Activated T-helper 1 cell treated with anti-CD3 and anti-CD28 coated beads, Interleukin-12 subunit alpha, Interleukin-12 subunit beta, Interleukin-2, Interleukin-4 antibody, amounts not matched to agents 30 ng/mL and 10 ng/mL and 1 ng/mL, durations not matched to agents 14 hours and 24 hours and 36 hours (primary cell): ENCODE measurements at regions of chr11 and their contacts with region 1.

Region 1: DNA sequence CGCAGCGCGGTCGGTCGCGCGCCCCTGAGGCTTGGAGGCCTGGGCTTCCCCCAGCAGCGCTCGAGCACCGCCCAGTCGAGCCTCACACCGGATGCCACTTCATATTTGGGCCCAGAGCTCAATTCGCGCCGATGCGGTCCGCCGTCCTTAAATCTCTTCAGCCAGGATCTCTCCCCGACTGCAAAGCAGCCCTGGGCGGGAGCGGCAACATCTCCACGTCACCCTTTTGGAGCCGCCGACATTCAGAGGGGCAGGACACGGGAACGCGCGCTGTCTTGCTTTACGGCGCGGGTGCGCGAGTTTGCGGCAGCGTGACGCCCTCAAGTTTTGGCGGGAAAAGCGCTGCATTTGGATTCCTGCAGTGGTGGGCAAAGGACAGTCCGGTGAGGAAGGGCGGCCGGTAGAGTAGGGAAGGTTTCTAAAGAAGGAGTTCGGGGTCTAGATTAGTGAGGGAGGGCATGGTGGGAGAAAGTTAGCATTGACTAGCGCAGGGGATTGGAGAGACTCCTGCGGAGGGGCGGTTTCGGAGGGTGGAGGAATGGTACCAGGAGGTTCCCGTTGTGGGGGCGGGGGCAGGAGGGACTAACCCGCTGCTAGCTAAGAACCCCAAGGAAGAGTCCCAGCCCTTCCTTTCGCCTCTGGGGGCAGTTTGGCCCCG is 796 bp downstream of the CHEK1 start:
- DNase-seq: peak; percentile 82
- H3K4me3 Mint-ChIP-seq: peak overlapping the region; percentile 98
- H3K27ac Mint-ChIP-seq: peak overlapping the region; percentile 99
- H3K4me1 Mint-ChIP-seq: peaks cover 38% of the 10 kb centered on the region
- H3K27me3 Mint-ChIP-seq: no peaks in the 10 kb centered on the region

Region 2: DNA sequence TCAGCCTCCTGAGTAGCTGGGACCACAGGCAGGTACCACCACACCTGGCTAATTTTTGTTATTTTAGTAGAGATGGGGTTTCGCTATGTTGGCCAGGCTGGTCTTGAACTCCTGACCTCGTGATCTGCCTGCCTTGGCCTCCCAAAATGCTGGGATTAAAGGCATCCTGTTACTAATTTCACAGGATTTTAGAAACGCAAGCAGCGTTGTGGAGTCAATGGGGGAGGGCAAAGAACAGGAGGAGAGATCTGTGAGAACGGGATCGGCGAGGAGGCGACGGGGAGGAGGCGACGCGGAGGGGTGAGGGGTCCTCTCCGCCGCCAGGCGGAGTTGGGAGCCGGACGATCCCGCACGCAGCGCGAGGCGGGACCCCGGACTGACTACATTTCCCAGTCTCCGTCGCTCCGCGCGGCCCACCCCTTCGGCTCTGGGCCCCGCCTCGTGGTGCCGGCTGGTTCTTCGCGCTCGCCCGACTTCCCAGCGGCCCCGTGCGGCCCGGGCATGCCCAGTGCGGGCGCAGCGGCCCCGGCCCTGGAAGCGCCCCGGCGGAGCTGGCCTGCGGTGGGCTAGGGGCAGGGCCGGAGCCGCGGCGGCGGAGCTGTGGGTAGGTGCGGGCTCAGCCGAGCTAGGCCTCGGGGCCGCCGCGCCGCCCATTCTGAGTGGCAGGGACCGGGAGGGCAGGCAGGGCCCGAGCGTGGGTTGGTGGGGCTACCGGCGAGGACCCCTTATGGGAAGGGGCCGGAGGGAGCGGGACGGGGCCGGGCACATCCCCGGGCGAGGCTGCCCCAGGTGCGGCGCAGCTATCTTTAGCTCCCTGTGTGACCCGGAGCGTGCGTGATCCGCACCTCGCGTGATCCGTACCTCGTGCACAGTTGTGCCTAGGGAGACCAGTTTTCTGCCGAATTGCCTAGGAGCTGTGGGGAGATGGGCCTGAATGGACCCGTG is 56.5 kb before region 1 on chr11 and contains the start of gene EI24:
- intact Hi-C with region 1: loop called (anchors 1 kb)
- DNase-seq: peak; percentile 88
- H3K4me3 Mint-ChIP-seq: peak within 1 kb of the TSS; percentile 95
- H3K27ac Mint-ChIP-seq: peak within 1 kb of the TSS; percentile 94
- H3K4me1 Mint-ChIP-seq: peaks cover 23% of the 10 kb centered on the region
- H3K27me3 Mint-ChIP-seq: no peaks in the 10 kb centered on the region
- total RNA-seq, gene EI24: 61.6 and 62.4 TPM in 2 replicates

Region 3: GRCh38 chr11:125637840-125638239 is 12.1 kb after region 1 on chr11:
- intact Hi-C with region 1: loop called (anchors 2 kb)
- DNase-seq: no peak
- H3K4me3 Mint-ChIP-seq: no peak overlapping the region
- H3K27ac Mint-ChIP-seq: no peak overlapping the region
- H3K4me1 Mint-ChIP-seq: peaks cover 18% of the 10 kb centered on the region
- H3K27me3 Mint-ChIP-seq: no peaks in the 10 kb centered on the region

Region 4: GRCh38 chr11:125902927-125903710 is 277.4 kb after region 1 on chr11 and contains the start of gene PUS3:
- intact Hi-C with region 1: loop called (anchors 1 kb)
- DNase-seq: peak; percentile 85
- H3K4me3 Mint-ChIP-seq: peak within 1 kb of the TSS; percentile 98
- H3K27ac Mint-ChIP-seq: peak within 1 kb of the TSS; percentile 88
- H3K4me1 Mint-ChIP-seq: peaks cover 28% of the 10 kb centered on the region
- H3K27me3 Mint-ChIP-seq: peaks cover 34% of the 10 kb centered on the region
- total RNA-seq, gene PUS3: 16.5 and 23.6 TPM in 2 replicates

Region 5: DNA sequence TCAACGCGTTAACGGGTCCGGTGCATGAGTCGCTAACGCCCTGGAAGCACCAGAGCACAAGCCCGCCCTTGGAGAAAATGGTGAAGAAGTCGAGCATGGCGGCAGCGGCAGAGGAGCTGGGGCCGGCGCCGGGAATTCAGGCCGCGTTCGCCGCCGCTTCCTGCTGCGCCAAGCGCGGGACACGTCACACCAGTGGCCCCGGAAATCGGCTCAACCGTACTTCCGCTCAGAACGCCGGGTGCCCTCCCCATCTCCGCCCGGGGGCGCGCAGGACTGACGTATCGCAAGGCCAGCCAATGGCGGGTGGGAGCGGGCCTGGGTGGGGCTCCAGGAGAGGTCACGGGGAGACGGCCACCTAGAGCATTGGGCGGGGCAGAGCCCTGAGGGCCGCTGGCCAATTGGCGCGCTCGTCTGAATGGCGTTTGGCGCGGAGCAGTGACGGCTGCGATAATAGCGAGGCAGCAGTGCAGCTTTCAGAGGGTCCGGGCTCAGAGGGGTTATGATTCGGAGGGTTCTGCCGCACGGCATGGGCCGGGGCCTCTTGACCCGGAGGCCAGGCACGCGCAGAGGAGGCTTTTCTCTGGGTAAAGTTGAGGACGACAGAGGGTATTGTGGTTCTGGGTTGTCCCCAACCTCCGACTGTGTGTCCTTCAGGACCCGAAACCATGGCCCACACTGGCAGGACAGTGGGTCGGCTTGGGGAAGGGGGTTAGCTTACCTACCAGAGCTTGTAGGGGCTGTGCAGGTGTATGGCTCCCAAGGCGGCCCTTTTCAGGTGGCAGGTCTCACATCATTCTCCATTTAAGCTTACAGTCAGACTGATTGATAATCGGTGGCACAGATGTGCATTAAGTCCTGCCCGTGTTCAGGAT is 643.2 kb after region 1 on chr11 and contains the starts of genes FOXRED1 and SRPRA:
- intact Hi-C with region 1: loop called (anchors 2 kb)
- DNase-seq: peak; percentile 100
- H3K4me3 Mint-ChIP-seq: peak within 1 kb of the TSS; percentile 99
- H3K27ac Mint-ChIP-seq: peak within 1 kb of the TSS; percentile 96
- H3K4me1 Mint-ChIP-seq: peaks cover 45% of the 10 kb centered on the region
- H3K27me3 Mint-ChIP-seq: no peaks in the 10 kb centered on the region
- total RNA-seq, gene FOXRED1: 52.9 and 56.5 TPM in 2 replicates
- total RNA-seq, gene SRPRA: 194 and 195 TPM in 2 replicates